ENCODE measurements at regions of chr21 and their contacts with region 1.

Region 1: DNA sequence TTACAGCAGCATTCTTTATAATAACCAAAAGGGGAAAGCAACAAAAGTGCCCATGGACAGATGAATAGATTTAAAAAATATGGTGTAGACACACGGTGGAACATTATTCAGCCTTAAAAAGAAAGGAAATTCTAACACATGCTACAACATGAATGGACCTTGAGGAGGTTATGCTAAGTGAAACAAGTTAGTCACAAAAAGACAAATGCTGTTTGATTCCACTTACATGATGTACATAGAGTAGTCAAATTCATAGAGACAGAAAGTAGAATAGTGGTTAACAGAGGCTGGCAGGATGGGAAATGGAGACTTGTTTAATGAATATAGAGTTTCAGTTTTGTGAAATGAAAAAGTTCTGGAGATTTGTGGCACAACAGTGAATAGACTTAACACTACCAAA is 151.4 kb downstream of the CYYR1 start:
- DNase-seq: no peak
- H3K4me3 Mint-ChIP-seq: no peak overlapping the region
- H3K27ac Mint-ChIP-seq: no peak overlapping the region
- H3K4me1 Mint-ChIP-seq: no peaks in the 10 kb centered on the region
- H3K27me3 Mint-ChIP-seq: peaks cover 4% of the 10 kb centered on the region

Region 2: GRCh38 chr21:26469789-26470188 is 48.1 kb after region 1 on chr21:
- intact Hi-C with region 1: loop called (anchors 5 kb)
- DNase-seq: no peak
- H3K4me3 Mint-ChIP-seq: no peak overlapping the region
- H3K27ac Mint-ChIP-seq: no peak overlapping the region
- H3K4me1 Mint-ChIP-seq: peaks cover 14% of the 10 kb centered on the region
- H3K27me3 Mint-ChIP-seq: no peaks in the 10 kb centered on the region